Sigmoid colon (tissue), 7 donors: ENCODE measurements at regions of chr4 and their contacts with region 1.

Region 1: GRCh38 chr4:137531986-137532868 is at the start of gene PCDH18:
- DNase-seq: peak; percentile 97
- H3K4me3 ChIP-seq: peak within 1 kb of the TSS; percentile 52 to 70 (median 63)
- H3K27ac ChIP-seq: peak within 1 kb of the TSS; percentile 80 to 87 (median 85)
- H3K4me1 ChIP-seq: peaks cover 0 to 17% (median 12%) of the 10 kb centered on the region in 4 donors
- H3K27me3 ChIP-seq: no peaks in the 10 kb centered on the region
- CTCF ChIP-seq: no peak
- EP300 ChIP-seq: no peak
- POLR2A ChIP-seq: peak in 1 of 2 donors; percentile 66
- total RNA-seq, gene PCDH18: 64.6 to 108 (median 70.4) TPM

Region 2: DNA sequence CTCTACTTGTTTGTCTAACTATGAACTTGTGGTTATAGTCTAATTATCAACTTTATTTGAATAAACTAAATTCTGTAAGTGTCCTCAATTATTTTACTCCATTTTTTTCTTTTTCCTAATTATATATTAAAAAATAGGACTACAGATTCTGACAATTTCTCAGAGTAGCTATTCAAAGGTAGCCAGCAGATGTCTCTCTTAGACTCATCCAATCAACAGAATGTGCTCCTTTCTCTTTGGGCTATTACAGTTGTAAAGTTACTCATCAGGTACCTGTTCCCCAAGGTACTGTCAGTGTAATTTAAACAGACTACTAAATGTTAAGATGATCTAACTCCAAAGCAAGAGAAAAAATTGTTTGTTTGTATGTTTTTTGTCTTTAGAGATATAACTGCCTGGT is 248.5 kb before region 1 on chr4:
- intact Hi-C with region 1: loop called (anchors 5 kb)
- DNase-seq: no peak
- H3K4me3 ChIP-seq: no peak overlapping the region
- H3K27ac ChIP-seq: no peak overlapping the region
- H3K4me1 ChIP-seq: no peaks in the 10 kb centered on the region
- H3K27me3 ChIP-seq: no peaks in the 10 kb centered on the region
- CTCF ChIP-seq: peak in 2 of 4 experiments; percentile 29
- EP300 ChIP-seq: no peak
- POLR2A ChIP-seq: no peak

Region 3: GRCh38 chr4:137610960-137611359 is 78.7 kb after region 1 on chr4:
- intact Hi-C with region 1: loop called (anchors 5 kb)
- DNase-seq: no peak
- H3K4me3 ChIP-seq: no peak overlapping the region
- H3K27ac ChIP-seq: no peak overlapping the region
- H3K4me1 ChIP-seq: peaks cover 0 to 10% (median 6%) of the 10 kb centered on the region in 4 donors
- H3K27me3 ChIP-seq: no peaks in the 10 kb centered on the region
- CTCF ChIP-seq: peak in 1 of 4 experiments; percentile 19
- EP300 ChIP-seq: no peak
- POLR2A ChIP-seq: no peak

Region 4: GRCh38 chr4:137705171-137705783 is 173.1 kb after region 1 on chr4:
- intact Hi-C with region 1: loop called (anchors 5 kb)
- DNase-seq: no peak
- H3K4me3 ChIP-seq: no peak overlapping the region
- H3K27ac ChIP-seq: peak overlapping the region; percentile 54 to 74 (median 70)
- H3K4me1 ChIP-seq: peaks cover 0 to 68% (median 44%) of the 10 kb centered on the region in 4 donors
- H3K27me3 ChIP-seq: no peaks in the 10 kb centered on the region
- CTCF ChIP-seq: no peak
- EP300 ChIP-seq: peak in 1 of 4 donors; percentile 23
- POLR2A ChIP-seq: no peak

Region 5: GRCh38 chr4:138680989-138681604 is 1148.9 kb after region 1 on chr4:
- intact Hi-C with region 1: loop called (anchors 10 kb)
- DNase-seq: peak; percentile 89
- H3K4me3 ChIP-seq: no peak overlapping the region
- H3K27ac ChIP-seq: no peak overlapping the region
- H3K4me1 ChIP-seq: peaks cover 0 to 29% (median 13%) of the 10 kb centered on the region in 4 donors
- H3K27me3 ChIP-seq: no peaks in the 10 kb centered on the region
- CTCF ChIP-seq: peak; percentile 50 to 91 (median 85)
- EP300 ChIP-seq: no peak
- POLR2A ChIP-seq: no peak